ENCODE measurements at regions of chr17 and their contacts with region 1.

Region 1: DNA sequence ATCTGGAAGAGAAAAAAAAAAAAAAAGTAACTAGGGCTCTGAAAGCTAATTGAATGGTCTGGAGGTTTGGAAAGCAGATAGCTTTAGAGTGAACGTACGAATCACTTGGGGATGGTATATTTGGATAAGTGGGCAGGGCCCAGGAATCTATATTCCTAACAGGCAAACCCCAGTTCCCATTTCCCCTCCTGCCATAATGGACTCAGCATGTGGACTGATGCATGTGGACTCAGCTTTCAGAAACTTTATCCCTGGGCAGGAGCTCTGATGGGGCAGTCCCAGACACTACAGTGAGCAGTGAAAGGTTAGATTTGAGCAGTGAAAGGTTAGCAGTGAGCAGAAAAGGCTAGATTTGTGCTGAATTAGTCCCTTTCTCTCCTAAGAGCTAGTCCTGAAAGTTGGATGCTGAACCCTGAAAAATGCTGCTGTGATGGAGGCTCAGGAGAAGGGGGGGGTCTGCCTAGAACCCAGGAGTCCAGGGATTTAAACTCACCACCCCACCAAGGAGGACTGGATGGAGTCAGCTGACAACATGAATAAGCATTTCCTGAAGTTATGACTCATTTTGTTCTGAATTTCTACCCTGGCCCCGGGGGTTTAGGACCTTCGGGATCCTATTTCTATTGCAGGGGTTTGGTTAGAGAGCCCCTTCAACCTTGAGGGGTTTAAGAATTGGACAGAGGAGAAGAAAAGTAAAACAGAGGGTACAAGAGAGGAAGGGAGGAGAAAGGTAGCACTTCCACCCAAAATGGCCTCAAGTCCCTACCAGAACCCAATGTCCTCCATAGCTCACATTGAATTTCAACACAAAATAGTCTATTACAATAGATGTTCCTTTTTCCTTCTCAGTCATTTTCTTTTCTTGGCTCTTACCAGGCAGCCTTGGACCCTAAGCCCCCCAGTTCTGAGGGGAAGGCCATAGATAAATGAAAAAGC is 10.3 kb upstream of the FZD2 start:
- DNase-seq: no peak
- ATAC-seq: no peak

Region 2: GRCh38 chr17:43723697-43724359 is 823.1 kb before region 1 on chr17:
- intact Hi-C with region 1: no loop called
- DNase-seq: no peak
- ATAC-seq: no peak

Region 3: GRCh38 chr17:44272321-44272951 is 274.5 kb before region 1 on chr17:
- intact Hi-C with region 1: loop called (anchors 2 kb)
- DNase-seq: no peak
- ATAC-seq: no peak

Measured in sciatic nerve (tissue), 2 donors.